Heart right ventricle (tissue), 16 donors: ENCODE measurements at regions of chr3 and their contacts with region 1.

Region 1: GRCh38 chr3:10945683-10946287 is 46.8 kb upstream of the SLC6A1 start:
- DNase-seq: peak; percentile 27 to 69
- ATAC-seq: peak; percentile 72 to 85 (median 82)
- H3K4me3 ChIP-seq: no peak overlapping the region
- H3K27ac ChIP-seq: no peak overlapping the region
- H3K4me1 ChIP-seq: peaks cover 0 to 8% (median 0%) of the 10 kb centered on the region in 9 donors
- H3K27me3 ChIP-seq: peaks cover 0 to 56% (median 19%) of the 10 kb centered on the region in 7 donors
- CTCF ChIP-seq: peak; percentile 65 to 96 (median 85)

Region 2: DNA sequence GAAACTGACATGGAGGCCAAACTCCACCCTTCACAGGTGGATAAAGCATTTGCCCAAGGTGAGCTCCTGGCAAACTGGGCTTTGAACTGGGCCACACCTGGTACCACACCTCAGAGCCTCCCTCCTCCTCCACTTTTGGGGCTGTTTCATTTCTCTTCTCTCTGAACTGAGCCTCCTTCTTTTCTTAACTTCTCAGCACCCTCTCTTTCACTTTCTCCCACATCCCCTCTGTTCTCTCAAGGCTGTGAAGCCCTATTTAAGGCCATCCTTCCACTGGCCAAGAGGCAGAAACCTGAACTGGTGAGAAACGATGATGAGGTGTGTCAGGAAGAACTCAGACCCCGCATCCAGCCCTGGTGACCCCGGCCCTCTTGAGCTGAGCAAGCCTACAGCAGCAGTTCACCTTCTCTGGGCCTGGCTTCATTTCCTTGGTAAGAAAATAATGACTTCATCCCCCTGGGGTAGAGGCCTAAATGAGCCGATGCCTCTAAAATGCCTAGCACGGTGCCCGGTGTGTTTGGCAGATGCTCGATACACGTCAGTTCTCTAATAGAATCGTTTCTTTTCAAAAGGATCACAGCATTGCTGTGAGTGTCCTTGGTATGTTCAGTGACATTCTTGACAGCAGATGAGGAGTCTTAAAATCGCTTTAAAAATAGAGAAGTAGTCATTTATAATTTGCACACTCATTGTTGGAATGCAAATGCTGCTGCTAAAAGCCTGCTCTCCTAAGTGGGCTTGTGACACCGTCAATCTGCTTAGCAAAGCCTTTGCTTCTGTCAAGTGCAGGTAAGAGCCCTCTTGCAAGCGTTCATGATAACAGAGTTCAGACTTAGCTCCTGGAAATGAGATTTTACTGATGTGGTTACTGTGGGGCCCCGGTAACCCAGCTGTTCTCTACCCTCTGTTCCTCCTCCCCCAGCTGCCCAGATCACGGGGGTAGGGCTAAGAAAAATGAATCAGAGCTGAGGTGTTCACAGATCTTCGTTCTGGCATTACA is 342.7 kb before region 1 on chr3:
- intact Hi-C with region 1: loop called in 1 of 10 experiments (anchors 5 kb)
- DNase-seq: no peak
- ATAC-seq: no peak
- H3K4me3 ChIP-seq: no peak overlapping the region
- H3K27ac ChIP-seq: no peak overlapping the region
- H3K4me1 ChIP-seq: no peaks in the 10 kb centered on the region
- H3K27me3 ChIP-seq: peaks cover 0 to 66% (median 24%) of the 10 kb centered on the region in 7 donors
- CTCF ChIP-seq: no peak

Region 3: GRCh38 chr3:10758304-10759061 is 187.3 kb before region 1 on chr3:
- intact Hi-C with region 1: loop called in 4 of 10 experiments (anchors 5 to 10 kb)
- DNase-seq: peak; percentile 22 to 42
- ATAC-seq: peak; percentile 75 to 89 (median 84)
- H3K4me3 ChIP-seq: no peak overlapping the region
- H3K27ac ChIP-seq: no peak overlapping the region
- H3K4me1 ChIP-seq: no peaks in the 10 kb centered on the region
- H3K27me3 ChIP-seq: peaks cover 0 to 76% (median 52%) of the 10 kb centered on the region in 7 donors
- CTCF ChIP-seq: peak; percentile 41 to 76 (median 72)

Region 4: DNA sequence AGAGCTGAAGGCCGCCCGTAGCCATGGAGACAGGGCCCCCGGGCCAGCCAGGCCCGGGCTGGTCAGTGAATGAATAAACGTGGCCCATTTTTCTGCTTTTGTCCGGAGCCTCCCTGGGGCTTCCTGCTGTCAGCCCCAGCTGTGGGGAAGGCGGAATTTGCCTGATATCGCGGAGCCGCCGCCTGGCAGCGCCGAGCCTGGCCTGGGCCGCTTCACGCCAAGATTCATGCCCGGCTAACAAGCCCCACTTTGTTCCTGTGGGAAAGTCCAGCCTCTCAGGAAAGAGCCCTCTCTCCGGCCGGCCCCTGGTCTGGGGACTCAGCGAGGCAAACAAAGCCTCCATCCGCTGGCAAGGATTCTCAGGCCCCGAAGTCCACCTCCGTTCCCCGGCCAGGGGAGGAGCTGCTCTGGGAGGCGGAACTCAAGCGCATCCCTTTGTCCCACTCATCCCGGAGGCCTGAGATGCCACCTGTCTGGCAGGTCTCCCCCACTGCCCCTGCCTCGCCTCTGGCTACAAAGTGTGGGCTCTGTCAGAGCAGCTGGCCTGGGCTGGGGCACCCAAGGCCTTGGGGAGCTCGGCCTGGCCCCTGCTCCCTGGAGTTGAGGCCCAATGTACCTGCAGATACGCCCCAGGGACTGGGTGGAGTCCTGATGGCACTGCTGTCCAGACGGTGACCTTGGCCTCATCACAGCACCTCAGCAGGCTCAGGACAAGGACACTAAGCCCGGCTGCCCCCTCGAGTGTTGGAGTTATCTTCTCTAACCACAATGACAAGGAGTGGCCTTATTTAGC is 181.3 kb before region 1 on chr3:
- intact Hi-C with region 1: loop called in 4 of 10 experiments (anchors 5 to 10 kb)
- DNase-seq: no peak
- ATAC-seq: peak in 2 of 8 donors; percentile 24 to 46
- H3K4me3 ChIP-seq: no peak overlapping the region
- H3K27ac ChIP-seq: no peak overlapping the region
- H3K4me1 ChIP-seq: no peaks in the 10 kb centered on the region
- H3K27me3 ChIP-seq: peaks cover 3 to 78% (median 53%) of the 10 kb centered on the region in 7 donors
- CTCF ChIP-seq: no peak

Region 5: GRCh38 chr3:10983219-10983916 is 37.6 kb after region 1 on chr3:
- intact Hi-C with region 1: loop called in 6 of 10 experiments (anchors 2 to 5 kb)
- DNase-seq: no peak
- ATAC-seq: peak in 6 of 8 donors; percentile 50 to 67 (median 56)
- H3K4me3 ChIP-seq: peak overlapping the region in 3 of 10 donors; percentile 11 to 26 (median 13)
- H3K27ac ChIP-seq: no peak overlapping the region
- H3K4me1 ChIP-seq: peaks cover 3 to 29% (median 16%) of the 10 kb centered on the region in 9 donors
- H3K27me3 ChIP-seq: peaks cover 0 to 10% (median 0%) of the 10 kb centered on the region in 7 donors
- CTCF ChIP-seq: peak; percentile 45 to 77 (median 73)

Region 6: GRCh38 chr3:11060500-11061251 is 114.9 kb after region 1 on chr3:
- intact Hi-C with region 1: loop called (anchors 1 to 5 kb)
- DNase-seq: peak; percentile 51 to 60
- ATAC-seq: peak; percentile 64 to 85 (median 78)
- H3K4me3 ChIP-seq: peak overlapping the region in 8 of 10 donors; percentile 6 to 47 (median 28)
- H3K27ac ChIP-seq: no peak overlapping the region
- H3K4me1 ChIP-seq: peaks cover 0 to 15% (median 7%) of the 10 kb centered on the region in 9 donors
- H3K27me3 ChIP-seq: peaks cover 0 to 45% (median 21%) of the 10 kb centered on the region in 7 donors
- CTCF ChIP-seq: peak; percentile 70 to 93 (median 89)

Region 7: DNA sequence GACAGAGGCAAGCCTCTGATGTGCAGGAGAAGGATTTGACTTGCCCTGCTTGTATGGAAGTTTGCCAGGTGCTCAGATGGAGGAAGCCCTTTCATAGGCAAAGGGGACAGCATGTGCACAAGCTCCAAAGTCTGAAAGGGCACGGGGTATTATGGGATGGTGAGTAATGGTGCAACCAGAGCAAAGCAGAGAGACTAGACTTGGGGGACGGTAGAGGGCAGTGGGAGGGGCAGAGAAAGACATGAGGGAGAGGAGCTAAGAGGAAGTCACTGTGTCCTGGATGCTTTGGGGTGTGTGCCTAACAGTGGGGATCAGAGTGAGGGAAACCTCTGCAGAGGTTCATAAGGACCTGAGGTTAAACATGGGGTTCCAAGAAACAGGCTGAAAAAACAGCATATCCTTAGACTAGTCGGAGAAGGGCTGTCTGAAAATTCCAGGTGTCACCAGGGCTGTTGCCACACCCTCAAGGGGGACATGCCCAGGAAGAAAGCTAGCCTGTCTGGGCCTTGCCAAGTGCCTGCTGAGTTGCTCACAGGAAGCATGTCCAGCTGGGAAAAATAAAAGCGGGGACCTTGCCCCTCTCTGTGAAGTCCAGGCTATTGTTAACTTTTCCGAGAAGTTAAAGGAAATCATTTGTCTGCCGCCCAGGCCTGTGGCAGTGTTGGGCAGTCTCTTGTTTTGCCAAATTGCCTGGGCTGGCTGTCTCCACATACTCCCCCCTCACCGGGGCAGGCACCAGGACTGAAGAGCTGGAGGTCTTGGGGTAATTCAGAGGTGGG is 255.7 kb after region 1 on chr3:
- intact Hi-C with region 1: loop called in 2 of 10 experiments (anchors 5 to 10 kb)
- DNase-seq: peak in 1 of 2 donors; percentile 14
- ATAC-seq: peak; percentile 50 to 75 (median 69)
- H3K4me3 ChIP-seq: no peak overlapping the region
- H3K27ac ChIP-seq: peak overlapping the region in 5 of 10 donors; percentile 2 to 74 (median 56)
- H3K4me1 ChIP-seq: peaks cover 0 to 41% (median 12%) of the 10 kb centered on the region in 9 donors
- H3K27me3 ChIP-seq: peaks cover 0 to 6% (median 0%) of the 10 kb centered on the region in 7 donors
- CTCF ChIP-seq: no peak